Activated B cell treated with CpG ODN at 0.5 μM for 24 hours (primary cell): ENCODE measurements at regions of chr15 and their contacts with region 1.

Region 1: GRCh38 chr15:40357723-40358470 is at the start of gene DISP2:
- DNase-seq: peak; percentile 93
- ATAC-seq: peak; percentile 94
- H3K4me3 Mint-ChIP-seq: peak within 1 kb of the TSS; percentile 87
- H3K27ac Mint-ChIP-seq: no peak within 1 kb of the TSS
- H3K4me1 Mint-ChIP-seq: peaks cover 8% of the 10 kb centered on the region
- H3K27me3 Mint-ChIP-seq: no peaks in the 10 kb centered on the region
- CTCF ChIP-seq: no peak
- total RNA-seq, gene DISP2: 0.38 and 0.39 TPM in 2 replicates

Region 2: DNA sequence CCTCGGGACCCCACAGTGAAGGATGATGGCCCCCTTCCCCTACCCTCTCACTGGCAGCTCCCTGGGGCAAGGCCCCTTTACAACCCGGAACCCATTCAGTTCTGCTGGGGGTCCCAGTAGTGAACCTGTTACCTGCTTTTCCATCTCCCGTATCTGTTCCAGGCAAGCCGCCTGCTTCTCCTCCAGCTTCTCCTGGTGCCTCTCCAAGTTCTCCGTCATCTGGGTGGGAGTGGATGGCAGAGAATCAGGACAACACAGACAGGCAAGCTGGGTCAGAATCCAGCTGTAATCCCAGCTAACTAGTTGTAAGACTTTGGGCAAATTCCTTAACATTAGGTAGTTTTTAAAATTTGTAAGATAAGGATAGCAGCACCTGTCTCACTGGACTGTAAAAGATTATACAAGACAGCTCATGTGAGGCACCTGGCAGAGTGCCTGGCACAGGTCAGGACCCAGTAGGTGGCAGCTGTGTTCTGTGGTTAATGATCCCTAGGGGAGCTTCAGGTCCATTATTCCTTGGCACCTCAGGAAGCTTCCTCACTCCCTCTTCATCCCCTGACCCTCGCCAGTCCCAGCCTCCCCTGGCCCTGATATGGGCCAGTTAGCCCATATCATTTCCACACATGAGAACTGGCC is 68.6 kb before region 1 on chr15:
- CTCF ChIA-PET with region 1: no interaction called
- POLR2A ChIA-PET with region 1: no interaction called
- intact Hi-C with region 1: no loop called
- DNase-seq: no peak
- ATAC-seq: no peak
- H3K4me3 Mint-ChIP-seq: no peak overlapping the region
- H3K27ac Mint-ChIP-seq: no peak overlapping the region
- H3K4me1 Mint-ChIP-seq: no peaks in the 10 kb centered on the region
- H3K27me3 Mint-ChIP-seq: no peaks in the 10 kb centered on the region
- CTCF ChIP-seq: no peak

Region 3: DNA sequence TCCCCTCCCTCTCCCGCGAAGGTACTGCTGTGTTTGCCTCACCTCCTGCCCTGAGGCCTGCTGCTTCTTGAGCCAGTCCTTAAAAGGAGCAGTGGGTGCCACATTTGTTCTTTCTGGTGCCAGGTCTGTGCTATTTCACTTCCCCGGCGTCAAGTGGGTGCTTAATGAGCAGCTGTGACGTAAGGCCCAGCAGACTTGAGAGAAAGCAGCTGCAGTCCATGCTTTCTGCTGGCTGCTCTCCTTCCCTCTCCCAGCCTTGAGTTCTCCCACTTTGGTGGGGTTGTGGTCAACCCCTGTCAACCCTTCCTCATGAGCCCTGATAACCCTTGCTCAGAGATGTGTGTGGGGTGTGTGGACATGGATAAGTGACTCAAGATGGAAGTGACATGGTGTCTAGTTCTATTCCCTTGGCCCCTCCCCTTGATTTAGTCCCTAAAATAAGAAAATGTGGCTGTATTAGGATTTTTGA is 27.5 kb before region 1 on chr15:
- CTCF ChIA-PET with region 1: no interaction called
- POLR2A ChIA-PET with region 1: no interaction called
- intact Hi-C with region 1: no loop called
- DNase-seq: no peak
- ATAC-seq: no peak
- H3K4me3 Mint-ChIP-seq: no peak overlapping the region
- H3K27ac Mint-ChIP-seq: no peak overlapping the region
- H3K4me1 Mint-ChIP-seq: peaks cover 26% of the 10 kb centered on the region
- H3K27me3 Mint-ChIP-seq: no peaks in the 10 kb centered on the region
- CTCF ChIP-seq: no peak

Region 4: GRCh38 chr15:40405501-40406381 is 47.8 kb after region 1 on chr15 and contains the start of gene IVD:
- CTCF ChIA-PET with region 1: no interaction called
- POLR2A ChIA-PET with region 1: interaction called, 8 read pairs
- intact Hi-C with region 1: loop called (anchors 1 kb)
- DNase-seq: peak; percentile 69
- ATAC-seq: peak; percentile 94
- H3K4me3 Mint-ChIP-seq: peak within 1 kb of the TSS; percentile 88
- H3K27ac Mint-ChIP-seq: peak within 1 kb of the TSS; percentile 67
- H3K4me1 Mint-ChIP-seq: peaks cover 34% of the 10 kb centered on the region
- H3K27me3 Mint-ChIP-seq: no peaks in the 10 kb centered on the region
- CTCF ChIP-seq: no peak
- total RNA-seq, gene IVD: 63.5 and 76.7 TPM in 2 replicates

Region 5: GRCh38 chr15:40470423-40471104 is 112.7 kb after region 1 on chr15 and contains the start of gene CHST14:
- CTCF ChIA-PET with region 1: no interaction called
- POLR2A ChIA-PET with region 1: no interaction called
- intact Hi-C with region 1: loop called (anchors 1 kb)
- DNase-seq: peak; percentile 69
- ATAC-seq: peak; percentile 91
- H3K4me3 Mint-ChIP-seq: peak within 1 kb of the TSS; percentile 88
- H3K27ac Mint-ChIP-seq: peak within 1 kb of the TSS; percentile 77
- H3K4me1 Mint-ChIP-seq: peaks cover 10% of the 10 kb centered on the region
- H3K27me3 Mint-ChIP-seq: no peaks in the 10 kb centered on the region
- CTCF ChIP-seq: no peak
- total RNA-seq, gene CHST14: 10.1 and 10.2 TPM in 2 replicates